Activated T-helper 1 cell treated with anti-CD3 and anti-CD28 coated beads, Interleukin-12 subunit alpha, Interleukin-12 subunit beta, Interleukin-2, Interleukin-4 antibody, amounts not matched to agents 30 ng/mL and 10 ng/mL and 1 ng/mL, durations not matched to agents 14 hours and 24 hours and 36 hours (primary cell): ENCODE measurements at regions of chr15 and their contacts with region 1.

Region 1: GRCh38 chr15:40421246-40422157 is 15.9 kb downstream of the IVD start:
- DNase-seq: peak; percentile 72
- H3K4me3 Mint-ChIP-seq: no peak overlapping the region
- H3K27ac Mint-ChIP-seq: no peak overlapping the region
- H3K4me1 Mint-ChIP-seq: no peaks in the 10 kb centered on the region
- H3K27me3 Mint-ChIP-seq: no peaks in the 10 kb centered on the region

Region 2: GRCh38 chr15:40064221-40064894 is 357.1 kb before region 1 on chr15:
- intact Hi-C with region 1: no loop called
- DNase-seq: no peak
- H3K4me3 Mint-ChIP-seq: peak overlapping the region; percentile 68
- H3K27ac Mint-ChIP-seq: peak overlapping the region; percentile 90
- H3K4me1 Mint-ChIP-seq: peaks cover 19% of the 10 kb centered on the region
- H3K27me3 Mint-ChIP-seq: no peaks in the 10 kb centered on the region

Region 3: DNA sequence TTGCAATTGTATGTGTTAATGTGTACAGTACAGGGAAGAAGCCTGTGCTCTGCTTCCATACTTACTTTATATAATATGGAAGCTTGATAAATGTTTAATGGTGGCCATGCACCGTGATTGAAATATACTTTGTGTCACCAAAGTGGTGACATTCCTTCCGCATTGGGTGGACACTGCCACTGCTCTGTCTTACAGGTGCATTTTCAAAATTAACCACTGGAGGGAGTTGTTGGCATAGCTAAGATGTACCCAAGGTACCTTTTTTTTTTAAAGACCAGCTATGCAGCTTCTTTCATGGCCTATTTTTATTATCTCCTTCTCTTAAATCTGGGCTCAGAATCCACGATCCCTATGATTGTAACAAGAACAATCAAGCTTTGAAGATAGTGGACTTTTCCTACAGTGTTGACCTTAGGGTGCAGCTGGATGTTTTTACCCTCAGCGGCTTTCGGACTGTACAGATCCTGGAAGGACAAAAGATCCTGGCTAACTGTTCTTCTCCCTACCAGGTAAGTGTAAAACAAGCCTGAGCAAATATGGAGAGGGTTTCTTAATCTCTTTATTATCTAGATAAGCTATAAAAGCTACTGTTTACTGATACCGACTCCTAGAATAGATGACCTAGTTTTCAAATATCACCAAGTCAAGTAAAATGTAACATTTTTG is 204.2 kb before region 1 on chr15:
- intact Hi-C with region 1: loop called (anchors 10 kb)
- DNase-seq: peak; percentile 38
- H3K4me3 Mint-ChIP-seq: no peak overlapping the region
- H3K27ac Mint-ChIP-seq: no peak overlapping the region
- H3K4me1 Mint-ChIP-seq: no peaks in the 10 kb centered on the region
- H3K27me3 Mint-ChIP-seq: no peaks in the 10 kb centered on the region

Region 4: GRCh38 chr15:40330368-40330836 is 91.1 kb before region 1 on chr15:
- intact Hi-C with region 1: no loop called
- DNase-seq: no peak
- H3K4me3 Mint-ChIP-seq: no peak overlapping the region
- H3K27ac Mint-ChIP-seq: no peak overlapping the region
- H3K4me1 Mint-ChIP-seq: peaks cover 44% of the 10 kb centered on the region
- H3K27me3 Mint-ChIP-seq: peaks cover 6% of the 10 kb centered on the region

Region 5: DNA sequence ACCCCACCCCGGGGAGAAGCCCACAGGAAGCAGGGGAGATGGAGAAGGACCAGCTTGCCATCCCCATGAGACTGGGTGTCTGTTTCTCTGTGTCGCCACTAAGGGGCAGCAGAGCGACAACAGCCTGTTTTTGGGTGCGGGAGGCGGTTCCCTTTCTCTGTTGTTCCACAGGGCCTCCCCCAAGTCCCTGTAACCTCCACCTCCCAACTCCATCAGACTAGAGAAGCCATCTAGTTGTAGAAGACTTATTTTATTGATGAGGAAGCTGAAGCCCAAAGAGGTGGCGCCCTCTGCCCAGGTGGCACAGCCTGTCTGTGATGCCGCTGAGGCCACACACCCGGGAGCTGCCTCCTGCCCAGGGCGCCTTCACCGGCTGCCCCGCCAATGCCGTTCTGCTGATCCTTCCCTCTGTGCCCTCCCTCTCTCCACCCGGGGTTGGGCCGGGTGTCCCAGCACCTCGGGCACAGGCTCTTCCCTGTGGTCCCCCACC is 76.8 kb before region 1 on chr15:
- intact Hi-C with region 1: loop called (anchors 1 kb)
- DNase-seq: peak; percentile 64
- H3K4me3 Mint-ChIP-seq: no peak overlapping the region
- H3K27ac Mint-ChIP-seq: no peak overlapping the region
- H3K4me1 Mint-ChIP-seq: no peaks in the 10 kb centered on the region
- H3K27me3 Mint-ChIP-seq: peaks cover 6% of the 10 kb centered on the region

Region 6: DNA sequence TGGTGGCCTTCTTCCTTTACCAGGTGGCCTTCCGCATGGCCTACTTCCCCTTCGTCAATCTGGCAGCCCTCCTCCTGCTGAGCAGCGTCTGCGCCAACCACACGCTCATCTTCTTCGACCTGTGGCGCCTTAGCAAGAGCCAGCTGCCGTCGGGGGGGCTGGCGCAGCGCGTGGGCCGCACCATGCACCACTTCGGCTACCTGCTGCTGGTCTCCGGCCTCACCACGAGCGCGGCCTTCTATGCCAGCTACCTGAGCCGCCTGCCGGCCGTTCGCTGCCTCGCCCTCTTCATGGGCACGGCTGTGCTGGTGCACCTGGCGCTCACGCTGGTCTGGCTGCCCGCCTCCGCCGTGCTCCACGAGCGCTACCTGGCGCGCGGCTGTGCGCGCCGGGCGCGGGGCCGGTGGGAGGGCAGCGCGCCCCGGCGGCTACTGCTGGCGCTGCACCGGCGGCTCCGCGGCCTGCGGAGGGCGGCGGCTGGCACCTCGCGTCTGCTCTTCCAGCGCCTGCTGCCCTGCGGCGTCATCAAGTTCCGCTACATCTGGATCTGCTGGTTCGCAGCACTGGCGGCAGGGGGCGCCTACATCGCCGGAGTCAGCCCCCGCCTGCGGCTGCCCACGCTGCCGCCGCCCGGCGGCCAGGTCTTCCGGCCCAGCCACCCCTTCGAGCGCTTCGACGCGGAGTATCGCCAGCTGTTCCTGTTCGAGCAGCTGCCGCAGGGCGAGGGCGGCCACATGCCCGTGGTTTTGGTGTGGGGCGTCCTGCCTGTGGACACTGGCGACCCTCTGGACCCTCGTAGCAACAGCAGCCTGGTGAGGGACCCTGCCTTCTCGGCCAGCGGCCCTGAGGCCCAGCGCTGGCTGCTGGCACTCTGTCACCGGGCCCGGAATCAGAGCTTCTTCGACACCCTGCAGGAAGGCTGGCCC is 53.6 kb before region 1 on chr15:
- intact Hi-C with region 1: loop called (anchors 1 kb)
- DNase-seq: peak; percentile 83
- H3K4me3 Mint-ChIP-seq: peak overlapping the region; percentile 75
- H3K27ac Mint-ChIP-seq: no peak overlapping the region
- H3K4me1 Mint-ChIP-seq: peaks cover 11% of the 10 kb centered on the region
- H3K27me3 Mint-ChIP-seq: peaks cover 12% of the 10 kb centered on the region

Region 7: GRCh38 chr15:40405501-40406381 is 15.8 kb before region 1 on chr15 and contains the start of gene IVD:
- intact Hi-C with region 1: loop called (anchors 1 kb)
- DNase-seq: peak; percentile 77
- H3K4me3 Mint-ChIP-seq: peak within 1 kb of the TSS; percentile 88
- H3K27ac Mint-ChIP-seq: peak within 1 kb of the TSS; percentile 87
- H3K4me1 Mint-ChIP-seq: peaks cover 37% of the 10 kb centered on the region
- H3K27me3 Mint-ChIP-seq: no peaks in the 10 kb centered on the region
- total RNA-seq, gene IVD: 59.6 and 65.2 TPM in 2 replicates